ENCODE measurements at regions of chr1 and their contacts with region 1.

Region 1: DNA sequence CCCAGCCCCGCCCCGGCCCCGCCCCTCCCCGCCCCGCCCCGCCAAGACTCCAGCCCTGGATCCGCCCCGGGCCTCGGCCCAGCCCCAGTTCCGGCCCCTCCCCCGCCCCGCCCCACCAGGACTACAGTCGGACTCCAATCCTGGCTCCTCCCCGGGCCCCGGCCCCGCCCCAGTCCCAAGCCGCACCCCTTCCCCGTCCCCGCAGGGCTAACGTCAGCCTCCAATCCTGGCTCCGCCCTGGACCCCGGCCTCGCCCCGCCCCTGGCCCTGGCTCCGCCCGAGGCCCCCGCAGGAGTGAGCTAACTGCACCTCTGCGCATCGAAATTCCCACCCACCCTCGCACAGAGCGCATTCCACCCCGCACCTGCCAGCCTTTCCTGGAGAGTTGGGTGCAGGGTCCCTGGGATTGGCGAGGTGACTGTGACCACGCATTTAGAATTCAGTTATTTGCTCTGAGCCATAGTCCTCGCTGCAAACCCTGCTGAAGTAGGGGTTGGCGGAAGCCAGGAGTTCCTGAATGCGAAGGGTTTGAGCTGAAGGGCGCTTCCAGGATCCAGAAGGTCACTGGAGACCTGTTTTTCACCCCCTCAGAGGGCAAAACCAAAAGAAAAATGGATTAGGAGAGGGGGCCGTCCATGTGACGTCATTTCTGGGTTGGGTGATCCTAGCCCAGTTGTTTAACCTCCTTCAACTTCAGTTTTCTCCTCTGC is 588 bp upstream of the IGSF8 start:
- DNase-seq: peak; percentile 91
- H3K4me3 ChIP-seq: peak overlapping the region; percentile 63 to 82 (median 79)
- H3K27ac ChIP-seq: peak overlapping the region; percentile 36
- H3K4me1 ChIP-seq: peaks cover 7% of the 10 kb centered on the region
- H3K27me3 ChIP-seq: peaks cover 14 to 16% of the 10 kb centered on the region in 2 experiments
- CTCF ChIP-seq: no peak
- POLR2A ChIP-seq: no peak

Region 2: GRCh38 chr1:158191299-158191698 is 1907.7 kb before region 1 on chr1:
- CTCF ChIA-PET with region 1: no interaction called
- POLR2A ChIA-PET with region 1: interaction called, 10 read pairs
- dilution Hi-C with region 1: no loop called
- intact Hi-C with region 1: no loop called
- DNase-seq: no peak
- H3K4me3 ChIP-seq: no peak overlapping the region
- H3K27ac ChIP-seq: no peak overlapping the region
- H3K4me1 ChIP-seq: no peaks in the 10 kb centered on the region
- H3K27me3 ChIP-seq: peaks cover 4 to 21% of the 10 kb centered on the region in 2 experiments
- CTCF ChIP-seq: no peak
- POLR2A ChIP-seq: no peak

Region 3: DNA sequence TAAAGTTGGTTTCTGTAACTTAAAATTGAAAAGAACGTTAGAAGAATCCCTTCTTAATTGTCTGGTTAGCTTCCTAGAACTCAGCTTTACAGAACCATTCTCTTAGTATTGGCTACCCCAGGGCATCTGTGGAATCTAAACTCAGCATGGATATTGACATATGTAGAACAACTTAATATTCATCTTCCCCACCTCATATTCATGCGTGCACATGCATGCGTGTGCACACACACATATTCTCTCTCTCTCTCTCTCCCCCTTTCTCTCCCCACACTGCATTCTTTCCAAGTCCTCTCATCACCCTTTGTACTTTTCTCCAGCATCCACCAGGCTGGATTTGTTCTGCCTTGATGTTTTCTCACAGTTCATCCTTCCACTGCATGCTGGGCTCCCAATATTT is 80.7 kb before region 1 on chr1:
- CTCF ChIA-PET with region 1: no interaction called
- POLR2A ChIA-PET with region 1: no interaction called
- dilution Hi-C with region 1: no loop called
- intact Hi-C with region 1: no loop called
- DNase-seq: no peak
- H3K4me3 ChIP-seq: no peak overlapping the region
- H3K27ac ChIP-seq: no peak overlapping the region
- H3K4me1 ChIP-seq: no peaks in the 10 kb centered on the region
- H3K27me3 ChIP-seq: peaks cover 11 to 15% of the 10 kb centered on the region in 2 experiments
- CTCF ChIP-seq: no peak
- POLR2A ChIP-seq: no peak

Region 4: DNA sequence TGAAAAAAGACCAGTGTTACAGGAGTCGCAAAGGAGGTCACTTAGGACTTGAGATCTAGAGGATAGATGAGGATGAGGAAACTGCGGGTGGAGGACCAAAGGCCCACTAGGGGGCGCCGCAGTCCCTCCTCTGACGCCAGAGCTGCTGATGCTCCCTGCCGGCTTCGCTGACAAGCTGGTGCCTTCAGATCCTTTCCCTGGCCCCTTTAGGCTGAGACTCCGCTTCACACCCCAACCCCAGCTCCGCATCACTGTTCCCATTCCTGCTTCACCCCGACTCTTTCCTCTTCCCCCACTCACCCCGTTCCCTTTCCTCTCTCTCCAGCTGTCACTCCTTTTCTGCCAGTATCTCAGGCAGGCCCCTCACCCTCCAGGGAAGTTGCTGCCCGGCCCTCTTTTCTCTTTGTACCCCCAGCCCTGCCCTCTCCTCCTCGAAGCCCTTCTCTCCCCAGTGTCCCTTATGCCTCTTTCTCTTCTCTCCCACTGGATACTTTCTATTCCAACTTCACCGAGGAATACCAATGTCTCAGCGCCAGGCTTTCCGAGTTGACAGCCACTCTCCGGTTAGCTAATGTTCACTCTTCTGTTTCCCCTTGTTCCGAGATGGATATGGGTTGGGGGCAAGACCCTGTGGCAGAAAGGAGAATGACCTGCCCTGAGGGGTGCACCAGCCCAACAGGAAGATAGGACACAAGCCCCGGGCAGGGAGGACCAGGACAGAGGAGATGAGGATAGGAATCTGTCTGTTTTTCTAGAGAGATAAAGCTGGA is 13.1 kb before region 1 on chr1:
- CTCF ChIA-PET with region 1: interaction called, 43 read pairs
- POLR2A ChIA-PET with region 1: no interaction called
- dilution Hi-C with region 1: no loop called
- intact Hi-C with region 1: no loop called
- DNase-seq: peak; percentile 65
- H3K4me3 ChIP-seq: no peak overlapping the region
- H3K27ac ChIP-seq: no peak overlapping the region
- H3K4me1 ChIP-seq: no peaks in the 10 kb centered on the region
- H3K27me3 ChIP-seq: peaks cover 35 to 37% of the 10 kb centered on the region in 2 experiments
- CTCF ChIP-seq: peak; percentile 82 to 99
- POLR2A ChIP-seq: no peak

Region 5: DNA sequence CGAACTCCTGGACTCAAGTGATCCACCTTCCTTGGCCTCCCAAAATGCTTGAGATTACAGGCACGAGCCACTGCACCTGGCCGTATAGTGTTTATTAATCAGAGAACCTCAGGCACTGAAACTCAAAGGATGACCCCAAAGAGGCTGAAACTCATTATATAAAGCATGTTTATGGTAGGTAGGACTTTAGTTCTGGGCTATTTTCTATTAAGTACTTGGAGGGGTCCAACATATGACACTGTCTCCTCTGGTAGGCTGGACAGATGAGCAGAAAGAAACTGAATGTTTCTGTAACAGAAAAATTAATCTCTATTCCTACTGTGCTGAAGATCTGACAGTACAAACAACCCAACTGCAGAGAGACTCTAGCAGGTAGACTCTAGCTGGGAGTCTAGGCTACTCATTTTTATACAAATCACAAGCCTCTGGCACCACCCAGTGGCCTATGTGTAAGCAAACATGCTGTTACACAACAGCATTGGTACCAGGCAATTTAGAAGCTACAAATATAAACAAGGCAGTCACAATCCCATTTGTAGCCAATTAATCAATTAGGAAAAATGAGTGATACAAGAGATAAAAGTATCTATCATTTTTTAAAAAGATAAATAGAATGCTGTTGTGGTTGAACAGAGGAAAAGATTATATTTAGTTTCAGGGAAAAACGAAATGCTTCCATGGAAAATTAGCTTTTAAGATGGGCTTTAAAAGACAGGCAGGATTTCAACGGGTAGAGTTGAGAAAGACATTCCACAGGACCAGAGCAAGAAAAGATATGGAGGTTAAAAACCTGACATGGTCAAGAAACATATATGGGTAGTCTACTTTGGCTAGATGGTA is 152.9 kb after region 1 on chr1:
- CTCF ChIA-PET with region 1: interaction called, 145 read pairs
- POLR2A ChIA-PET with region 1: no interaction called
- dilution Hi-C with region 1: no loop called
- intact Hi-C with region 1: loop called (anchors 1 kb)
- DNase-seq: peak; percentile 57
- H3K4me3 ChIP-seq: no peak overlapping the region
- H3K27ac ChIP-seq: no peak overlapping the region
- H3K4me1 ChIP-seq: peaks cover 5% of the 10 kb centered on the region
- H3K27me3 ChIP-seq: no peaks in the 10 kb centered on the region
- CTCF ChIP-seq: peak; percentile 49 to 64
- POLR2A ChIP-seq: no peak

Region 6: DNA sequence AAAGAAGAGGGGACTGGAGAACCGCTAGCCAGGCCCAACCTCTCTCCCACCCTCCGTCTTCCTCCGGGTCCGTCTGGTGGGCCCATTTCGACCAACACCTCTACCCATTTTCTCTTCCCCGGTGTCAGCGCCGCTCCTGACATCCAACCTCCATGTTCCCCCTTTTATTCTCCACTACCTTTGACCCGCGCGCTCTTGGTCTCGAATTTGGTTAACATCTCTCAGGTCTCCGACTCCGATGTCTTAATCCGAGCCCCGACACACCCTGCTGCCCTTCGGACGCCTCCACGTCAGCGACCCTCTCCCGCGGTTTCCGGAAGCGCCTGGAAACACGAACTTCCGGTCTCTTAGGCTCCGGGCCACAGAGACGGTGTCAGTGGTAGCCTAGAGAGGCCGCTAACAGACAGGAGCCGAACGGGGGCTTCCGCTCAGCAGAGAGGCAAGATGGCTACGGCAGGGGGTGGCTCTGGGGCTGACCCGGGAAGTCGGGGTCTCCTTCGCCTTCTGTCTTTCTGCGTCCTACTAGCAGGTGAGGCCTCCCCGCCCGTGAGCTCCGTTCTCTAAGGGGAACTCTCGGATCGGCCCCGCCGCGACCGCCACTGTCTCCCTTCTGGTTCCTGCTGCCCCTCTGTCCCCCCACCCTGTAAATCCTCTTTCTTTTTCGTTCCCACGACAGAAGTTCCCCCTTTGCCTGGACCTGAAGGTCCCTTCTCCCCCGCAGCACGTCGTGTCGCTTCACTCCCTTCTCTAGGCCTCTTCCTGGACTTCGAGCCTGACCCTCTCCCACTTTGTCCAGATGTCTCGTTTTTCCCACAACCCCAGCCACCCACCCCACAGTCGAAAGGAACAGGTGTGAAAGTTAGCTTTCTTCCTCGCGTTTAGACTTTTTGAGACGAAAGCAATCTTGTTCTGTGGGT is 244.2 kb after region 1 on chr1 and contains the starts of genes COPA and NCSTN:
- CTCF ChIA-PET with region 1: no interaction called
- POLR2A ChIA-PET with region 1: no interaction called
- dilution Hi-C with region 1: no loop called
- intact Hi-C with region 1: loop called (anchors 1 kb)
- DNase-seq: peak; percentile 95
- H3K4me3 ChIP-seq: peak within 1 kb of the TSS; percentile 51 to 92 (median 73)
- H3K27ac ChIP-seq: peak within 1 kb of the TSS; percentile 73
- H3K4me1 ChIP-seq: peaks cover 36% of the 10 kb centered on the region
- H3K27me3 ChIP-seq: no peaks in the 10 kb centered on the region
- CTCF ChIP-seq: no peak
- POLR2A ChIP-seq: peak; percentile 92
- total RNA-seq, gene COPA: 167 and 185 TPM in 2 replicates
- total RNA-seq, gene NCSTN: 92.5 and 95.4 TPM in 2 replicates

Region 7: DNA sequence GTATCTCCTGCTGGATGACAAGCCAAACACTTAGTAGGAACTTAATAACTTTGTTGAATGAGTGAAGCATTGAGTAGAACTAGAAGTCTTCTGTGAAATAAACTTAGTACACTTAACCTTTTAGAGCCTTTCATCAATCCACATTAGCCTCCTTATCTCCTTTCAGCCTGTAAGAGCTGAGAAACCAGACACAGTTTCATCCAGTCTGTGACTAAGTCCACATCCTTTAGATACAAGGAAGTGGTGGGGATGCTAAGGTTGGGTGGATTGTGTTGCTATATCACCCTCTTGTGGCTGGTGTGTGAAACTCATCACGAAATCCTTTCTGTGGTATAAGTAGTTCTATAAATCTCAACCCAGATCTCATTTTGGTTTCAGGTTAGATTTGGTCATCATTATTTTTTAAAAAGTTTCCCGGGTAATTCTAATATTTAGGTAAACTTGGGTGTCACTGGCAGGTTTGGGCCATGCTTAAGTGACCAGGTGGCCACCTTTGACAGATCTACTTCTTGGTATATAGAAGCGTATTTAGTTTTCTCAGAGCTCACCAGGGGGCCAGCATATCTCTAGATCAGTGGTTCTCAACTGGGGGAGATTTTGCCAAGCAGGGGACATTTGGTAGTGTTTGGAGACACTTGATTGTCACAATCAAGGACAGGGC is 508.1 kb after region 1 on chr1:
- CTCF ChIA-PET with region 1: interaction called, 3 read pairs
- POLR2A ChIA-PET with region 1: no interaction called
- dilution Hi-C with region 1: no loop called
- intact Hi-C with region 1: loop called (anchors 10 kb)
- DNase-seq: peak; percentile 70
- H3K4me3 ChIP-seq: no peak overlapping the region
- H3K27ac ChIP-seq: no peak overlapping the region
- H3K4me1 ChIP-seq: no peaks in the 10 kb centered on the region
- H3K27me3 ChIP-seq: peaks cover 18 to 20% of the 10 kb centered on the region in 2 experiments
- CTCF ChIP-seq: peak; percentile 60 to 65
- POLR2A ChIP-seq: no peak

Measured in endothelial cell of umbilical vein (primary cell).